Activated B cell treated with CpG ODN at 0.5 μM for 24 hours (primary cell): ENCODE measurements at regions of chr1 and their contacts with region 1.

Region 1: GRCh38 chr1:205273551-205273982 is 45.8 kb downstream of the TMCC2 start:
- DNase-seq: peak; percentile 77
- ATAC-seq: peak; percentile 89
- H3K4me3 Mint-ChIP-seq: peak overlapping the region; percentile 35
- H3K27ac Mint-ChIP-seq: peak overlapping the region; percentile 76
- H3K4me1 Mint-ChIP-seq: peaks cover 54% of the 10 kb centered on the region
- H3K27me3 Mint-ChIP-seq: no peaks in the 10 kb centered on the region
- CTCF ChIP-seq: peak; percentile 56

Region 2: GRCh38 chr1:203504397-203505250 is 1768.9 kb before region 1 on chr1:
- CTCF ChIA-PET with region 1: no interaction called
- POLR2A ChIA-PET with region 1: no interaction called
- intact Hi-C with region 1: no loop called
- DNase-seq: peak; percentile 45
- ATAC-seq: peak; percentile 57
- H3K4me3 Mint-ChIP-seq: no peak overlapping the region
- H3K27ac Mint-ChIP-seq: peak overlapping the region; percentile 10
- H3K4me1 Mint-ChIP-seq: peaks cover 2% of the 10 kb centered on the region
- H3K27me3 Mint-ChIP-seq: peaks cover 12% of the 10 kb centered on the region
- CTCF ChIP-seq: peak; percentile 83

Region 3: DNA sequence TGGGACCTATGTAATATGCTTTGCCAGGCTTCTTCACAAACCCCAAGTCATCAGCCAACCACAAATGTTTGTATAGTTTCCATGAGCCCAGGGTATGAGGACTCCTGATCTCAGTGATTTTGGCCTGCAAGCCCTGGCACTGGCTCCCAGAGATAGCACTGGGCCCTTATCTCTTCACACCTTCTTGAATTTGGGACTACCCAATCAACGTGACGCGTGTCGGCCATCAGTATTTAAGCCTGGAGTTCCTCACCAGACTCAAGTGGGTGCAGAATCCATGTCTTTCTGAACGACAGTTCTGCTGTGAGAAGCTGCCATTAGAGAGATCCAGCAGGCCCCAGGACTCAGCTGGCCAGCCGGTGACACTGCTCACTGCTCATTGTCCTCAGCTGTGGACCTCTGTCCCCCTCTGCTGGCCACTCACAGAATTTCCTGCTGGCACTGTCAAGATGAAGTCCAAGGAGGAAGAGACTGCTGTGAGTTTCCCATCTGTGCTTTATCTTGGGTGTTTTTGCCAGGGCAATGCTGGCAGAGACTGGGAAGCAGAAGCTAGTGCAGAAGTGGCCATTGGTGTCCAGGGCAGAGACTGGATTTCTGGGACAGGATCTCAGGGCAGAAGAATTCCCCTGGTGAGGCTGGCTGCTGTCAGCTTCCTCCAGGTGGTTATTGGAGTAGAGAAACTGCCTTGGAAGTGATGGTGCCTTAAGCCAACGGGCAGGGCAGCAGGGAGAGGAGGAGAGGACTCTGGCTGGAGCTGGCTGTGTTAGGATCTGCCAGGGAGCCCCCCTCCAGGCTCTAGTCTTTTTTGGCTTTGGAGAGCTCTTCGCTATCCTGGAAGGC is 17.4 kb before region 1 on chr1:
- CTCF ChIA-PET with region 1: interaction called, 10 read pairs
- POLR2A ChIA-PET with region 1: no interaction called
- intact Hi-C with region 1: no loop called
- DNase-seq: peak; percentile 74
- ATAC-seq: peak; percentile 99
- H3K4me3 Mint-ChIP-seq: no peak overlapping the region
- H3K27ac Mint-ChIP-seq: no peak overlapping the region
- H3K4me1 Mint-ChIP-seq: no peaks in the 10 kb centered on the region
- H3K27me3 Mint-ChIP-seq: peaks cover 3% of the 10 kb centered on the region
- CTCF ChIP-seq: peak; percentile 98

Region 4: DNA sequence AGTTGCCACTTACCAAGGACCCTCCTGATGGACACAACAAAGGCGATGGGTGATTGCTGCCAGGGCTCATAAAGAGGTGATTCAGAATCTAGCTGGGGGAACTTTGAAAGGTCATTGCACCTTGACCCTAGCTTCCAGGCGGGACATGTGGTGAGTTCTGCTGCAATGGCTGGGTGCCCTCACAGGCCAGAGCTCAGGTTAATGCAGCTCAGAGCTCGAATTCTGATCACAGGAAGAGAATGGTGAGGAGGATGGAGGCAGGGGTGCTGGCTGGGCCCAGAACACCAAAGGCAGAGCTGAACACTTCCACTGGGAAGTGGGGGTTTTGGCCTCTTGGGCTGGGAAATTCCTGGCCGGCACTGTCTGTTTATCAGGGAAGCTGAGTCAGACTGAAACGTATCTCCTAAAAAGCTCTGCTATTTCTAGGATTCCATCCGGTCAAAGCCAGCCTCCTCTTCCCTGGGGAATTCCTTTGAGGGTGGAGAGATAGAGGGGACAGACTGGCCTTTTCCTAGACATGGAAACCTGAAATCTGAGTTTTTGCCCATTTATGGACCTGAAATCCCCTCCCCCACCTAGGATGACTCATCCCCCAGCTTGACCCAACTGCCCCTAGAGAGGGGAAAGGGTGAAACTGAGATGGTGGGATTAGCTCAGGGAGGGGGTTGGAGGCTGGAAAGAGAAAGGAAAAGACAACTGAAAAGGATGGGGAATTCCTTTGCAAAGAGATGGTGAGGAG is 20.8 kb after region 1 on chr1:
- CTCF ChIA-PET with region 1: interaction called, 139 read pairs
- POLR2A ChIA-PET with region 1: interaction called, 196 read pairs
- intact Hi-C with region 1: no loop called
- DNase-seq: no peak
- ATAC-seq: no peak
- H3K4me3 Mint-ChIP-seq: peak overlapping the region; percentile 38
- H3K27ac Mint-ChIP-seq: peak overlapping the region; percentile 50
- H3K4me1 Mint-ChIP-seq: peaks cover 87% of the 10 kb centered on the region
- H3K27me3 Mint-ChIP-seq: no peaks in the 10 kb centered on the region
- CTCF ChIP-seq: no peak

Region 5: DNA sequence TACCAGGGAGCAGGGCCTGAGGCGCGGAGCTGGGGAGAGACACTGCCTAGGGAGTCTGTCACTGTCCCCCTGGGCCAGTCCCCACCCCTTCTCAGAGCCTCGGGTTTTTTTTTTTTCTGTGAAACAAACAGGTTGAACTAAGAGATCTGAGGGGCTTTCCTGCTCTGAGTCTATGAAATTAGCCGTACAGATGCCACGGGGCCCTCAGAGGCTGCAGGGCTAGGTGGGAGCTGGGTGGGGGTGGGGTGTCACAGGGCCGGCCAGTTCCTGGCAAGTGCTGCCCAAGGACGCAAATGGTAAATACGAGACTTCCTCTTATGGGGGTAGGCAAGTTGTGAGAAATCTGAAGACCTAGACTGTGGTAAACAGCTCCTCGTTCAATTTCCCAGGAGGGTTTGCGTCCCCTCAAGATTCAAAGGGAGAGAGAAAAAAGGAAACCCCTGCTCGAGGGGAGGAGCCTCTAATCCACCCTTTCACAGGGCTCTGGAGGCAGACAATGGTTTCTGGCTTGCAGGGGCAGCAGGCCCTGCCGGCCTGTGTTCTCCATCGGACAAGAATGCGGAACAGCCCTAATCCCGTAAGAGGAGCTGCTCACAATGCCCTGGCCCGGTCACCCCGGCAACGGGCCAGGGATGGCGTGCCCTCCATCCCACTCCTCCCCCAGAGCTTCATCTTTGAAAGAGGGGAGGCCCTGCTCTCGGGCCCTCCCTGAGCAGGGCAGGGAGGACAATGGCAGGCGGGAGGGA is 40.2 kb after region 1 on chr1:
- CTCF ChIA-PET with region 1: interaction called, 139 read pairs
- POLR2A ChIA-PET with region 1: interaction called, 1,622 read pairs
- intact Hi-C with region 1: loop called (anchors 1 kb)
- DNase-seq: peak; percentile 55
- ATAC-seq: peak; percentile 82
- H3K4me3 Mint-ChIP-seq: peak overlapping the region; percentile 85
- H3K27ac Mint-ChIP-seq: peak overlapping the region; percentile 98
- H3K4me1 Mint-ChIP-seq: peaks cover 95% of the 10 kb centered on the region
- H3K27me3 Mint-ChIP-seq: no peaks in the 10 kb centered on the region
- CTCF ChIP-seq: no peak

Region 6: GRCh38 chr1:205335643-205336091 is 62.1 kb after region 1 on chr1:
- CTCF ChIA-PET with region 1: interaction called, 34 read pairs
- POLR2A ChIA-PET with region 1: interaction called, 4 read pairs
- intact Hi-C with region 1: no loop called
- DNase-seq: peak; percentile 70
- ATAC-seq: peak; percentile 84
- H3K4me3 Mint-ChIP-seq: no peak overlapping the region
- H3K27ac Mint-ChIP-seq: no peak overlapping the region
- H3K4me1 Mint-ChIP-seq: peaks cover 6% of the 10 kb centered on the region
- H3K27me3 Mint-ChIP-seq: no peaks in the 10 kb centered on the region
- CTCF ChIP-seq: peak; percentile 84

Region 7: DNA sequence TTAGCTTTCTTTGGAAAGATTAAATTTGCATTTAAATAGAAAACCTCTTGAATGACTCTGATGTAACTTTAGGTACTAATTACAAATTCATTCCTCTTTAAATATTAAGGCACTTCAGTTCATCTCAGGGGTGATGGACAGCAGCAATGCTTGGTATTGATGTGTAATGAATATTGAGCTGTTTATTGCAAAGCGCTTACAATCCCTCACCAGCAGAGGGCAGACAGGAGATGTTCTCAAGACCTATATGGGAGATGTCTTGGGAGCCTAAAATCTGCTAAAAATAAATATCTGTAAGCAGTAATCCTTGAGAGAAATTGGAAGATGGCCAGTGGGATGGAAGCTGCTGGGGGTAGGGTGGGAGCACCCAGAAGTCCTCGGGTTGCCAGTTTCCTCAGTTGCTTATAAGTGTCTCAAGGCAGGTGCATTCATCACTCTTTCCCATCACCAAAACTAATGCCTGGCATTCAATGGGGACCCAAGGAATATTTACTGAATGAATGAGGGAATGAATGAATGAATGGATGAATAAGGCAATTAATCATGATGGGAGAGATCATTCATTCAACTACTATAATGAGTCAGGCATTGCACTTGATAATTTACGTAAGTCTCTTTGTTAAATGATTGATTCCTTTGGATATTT is 80.8 kb after region 1 on chr1:
- CTCF ChIA-PET with region 1: interaction called, 57 read pairs
- POLR2A ChIA-PET with region 1: interaction called, 8 read pairs
- intact Hi-C with region 1: loop called (anchors 1 kb)
- DNase-seq: no peak
- ATAC-seq: peak; percentile 69
- H3K4me3 Mint-ChIP-seq: no peak overlapping the region
- H3K27ac Mint-ChIP-seq: no peak overlapping the region
- H3K4me1 Mint-ChIP-seq: peaks cover 28% of the 10 kb centered on the region
- H3K27me3 Mint-ChIP-seq: peaks cover 9% of the 10 kb centered on the region
- CTCF ChIP-seq: no peak

Region 8: DNA sequence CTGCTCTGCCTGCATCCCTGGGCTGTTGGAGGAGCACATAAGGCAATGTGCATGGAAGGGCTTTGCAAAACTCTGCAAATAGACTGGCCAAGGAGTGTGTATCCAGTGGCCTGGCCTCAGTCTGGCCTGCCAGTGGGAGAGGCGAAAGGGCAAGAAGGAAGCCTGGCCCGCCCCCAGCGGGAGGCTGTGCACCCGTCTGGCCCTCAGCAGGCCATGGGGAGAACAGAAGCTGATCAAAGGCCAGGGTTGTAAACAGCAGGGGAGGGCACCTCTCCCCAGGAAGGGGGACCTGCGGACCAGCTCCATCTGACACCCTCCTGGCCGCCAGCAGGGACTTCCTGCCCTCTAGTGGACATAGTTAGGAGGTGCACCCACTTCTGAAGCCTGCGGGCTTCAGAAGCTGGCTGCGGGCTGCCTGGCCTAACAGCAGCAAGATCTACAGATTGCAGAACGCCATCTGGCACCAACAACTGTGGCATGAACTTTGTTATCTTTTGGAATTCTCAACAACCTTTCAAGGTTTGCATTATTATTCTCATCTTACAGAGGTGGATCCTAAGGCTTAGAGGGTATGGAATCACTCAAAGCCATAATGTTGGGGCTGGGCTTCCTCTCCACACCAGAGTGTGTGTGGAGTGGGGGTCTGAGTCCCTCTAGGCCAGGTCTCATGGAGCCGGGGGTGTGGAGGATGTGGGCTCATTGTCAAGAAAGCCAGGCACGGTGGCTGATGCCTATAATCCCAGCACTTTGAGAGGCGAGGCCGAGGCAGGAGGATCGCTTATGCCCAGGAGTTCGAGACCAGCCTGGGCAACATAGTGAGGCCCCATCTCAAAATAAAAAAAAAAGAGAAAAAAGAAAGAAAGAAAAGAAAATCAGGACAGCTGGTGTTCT is 212.0 kb after region 1 on chr1:
- CTCF ChIA-PET with region 1: interaction called, 54 read pairs
- POLR2A ChIA-PET with region 1: interaction called, 6 read pairs
- intact Hi-C with region 1: loop called (anchors 1 kb)
- DNase-seq: peak; percentile 47
- ATAC-seq: peak; percentile 80
- H3K4me3 Mint-ChIP-seq: no peak overlapping the region
- H3K27ac Mint-ChIP-seq: no peak overlapping the region
- H3K4me1 Mint-ChIP-seq: peaks cover 29% of the 10 kb centered on the region
- H3K27me3 Mint-ChIP-seq: peaks cover 36% of the 10 kb centered on the region
- CTCF ChIP-seq: peak; percentile 73